Activated CD4-positive, alpha-beta T cell treated with anti-CD3 and anti-CD28 coated beads, Interleukin-2, amount 10 ng/mL, durations not matched to agents 7 days and 5 days (primary cell): ENCODE measurements at regions of chr6 and their contacts with region 1.

Region 1: DNA sequence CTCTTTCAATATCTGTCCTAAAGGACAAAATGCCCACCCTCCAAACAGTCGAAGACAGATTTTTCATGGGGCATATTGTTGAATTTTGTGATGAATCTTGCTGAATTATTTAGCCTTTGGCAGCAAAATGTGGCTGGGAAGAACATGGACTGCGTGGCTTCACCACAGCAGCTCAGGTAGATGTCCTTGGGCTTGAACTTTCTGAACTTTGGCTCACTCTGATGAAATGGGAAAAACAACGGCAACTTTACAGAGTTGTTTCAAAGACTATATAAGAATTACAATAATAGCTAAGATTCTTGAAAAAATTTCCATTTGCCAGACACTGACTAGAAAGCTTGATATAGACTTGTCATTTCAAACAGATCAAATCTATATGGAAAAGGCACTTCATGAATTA is 52.8 kb upstream of the IL20RA start:
- DNase-seq: no peak
- H3K4me3 Mint-ChIP-seq: no peak overlapping the region
- H3K27ac Mint-ChIP-seq: no peak overlapping the region
- H3K4me1 Mint-ChIP-seq: peaks cover 34% of the 10 kb centered on the region
- H3K27me3 Mint-ChIP-seq: no peaks in the 10 kb centered on the region

Region 2: DNA sequence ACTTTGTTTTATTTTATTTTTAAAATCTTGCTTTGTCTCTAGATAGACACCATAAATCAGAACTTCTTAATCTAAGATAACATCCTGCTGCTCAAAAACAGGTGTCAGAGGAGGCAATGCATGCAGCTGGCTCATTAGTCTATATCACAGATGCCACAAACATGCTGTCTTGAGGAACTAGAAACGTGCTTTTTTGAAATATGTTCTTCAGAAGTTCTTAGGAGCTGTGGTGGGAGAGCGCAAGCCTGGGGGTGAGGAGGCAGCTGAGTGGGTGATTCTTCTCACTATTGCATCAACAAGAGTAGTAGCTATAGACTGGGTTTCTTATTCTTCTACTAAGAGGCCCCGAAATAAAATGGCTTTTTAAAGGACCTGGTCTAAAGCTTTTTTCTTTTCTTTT is 52.5 kb after region 1 on chr6:
- CTCF ChIA-PET with region 1: no interaction called
- POLR2A ChIA-PET with region 1: interaction called, 11 read pairs
- DNase-seq: no peak
- H3K4me3 Mint-ChIP-seq: no peak overlapping the region
- H3K27ac Mint-ChIP-seq: no peak overlapping the region
- H3K4me1 Mint-ChIP-seq: peaks cover 6% of the 10 kb centered on the region
- H3K27me3 Mint-ChIP-seq: peaks cover 8% of the 10 kb centered on the region